WTC11 (cell line): ENCODE measurements at regions of chr1 and their contacts with region 1.

Region 1: GRCh38 chr1:157369808-157370521 is 182.3 kb downstream of the FCRL5 start:
- DNase-seq: peak; percentile 55
- ATAC-seq: peak; percentile 88
- H3K4me3 Mint-ChIP-seq: no peak overlapping the region
- H3K27ac Mint-ChIP-seq: no peak overlapping the region
- H3K4me1 Mint-ChIP-seq: peaks cover 17% of the 10 kb centered on the region
- H3K27me3 Mint-ChIP-seq: no peaks in the 10 kb centered on the region
- CTCF ChIP-seq: peak; percentile 91

Region 2: DNA sequence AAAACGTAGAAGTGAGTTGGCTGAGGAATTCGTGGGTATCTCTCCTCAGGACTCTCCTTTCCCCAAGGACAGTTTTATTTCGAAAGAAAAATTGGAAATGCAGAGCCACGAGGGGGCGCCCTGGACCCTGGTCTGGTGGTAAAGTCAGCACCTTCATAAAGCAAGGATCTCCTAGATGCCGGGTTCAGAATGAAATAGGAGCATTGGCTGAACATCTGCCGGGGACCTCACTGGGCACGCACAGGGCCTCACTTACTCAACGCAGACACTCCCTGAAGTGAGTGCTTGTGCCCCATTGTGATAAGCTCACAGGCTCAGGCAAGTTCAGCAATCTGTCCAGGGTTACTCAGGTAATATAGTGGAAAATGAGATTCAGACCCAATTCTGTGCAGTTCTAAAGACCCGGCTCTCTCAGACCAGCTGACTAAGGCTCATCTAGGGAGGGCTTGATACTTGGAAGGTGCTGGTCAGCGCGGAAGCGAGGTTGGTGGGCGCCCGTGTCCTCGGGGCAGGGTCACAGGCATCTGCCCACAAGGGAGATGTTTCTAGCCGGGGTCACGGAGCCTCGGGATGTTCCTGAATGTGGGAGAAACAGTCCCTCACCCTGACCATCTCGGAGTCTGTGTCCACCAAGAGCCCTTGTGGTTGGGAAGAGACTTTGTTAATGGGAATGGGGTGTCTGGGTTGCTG is 176.1 kb before region 1 on chr1:
- CTCF ChIA-PET with region 1: interaction called, 13 read pairs
- POLR2A ChIA-PET with region 1: no interaction called
- DNase-seq: peak; percentile 90
- ATAC-seq: peak; percentile 56
- H3K4me3 Mint-ChIP-seq: no peak overlapping the region
- H3K27ac Mint-ChIP-seq: no peak overlapping the region
- H3K4me1 Mint-ChIP-seq: peaks cover 21% of the 10 kb centered on the region
- H3K27me3 Mint-ChIP-seq: peaks cover 12% of the 10 kb centered on the region
- CTCF ChIP-seq: peak; percentile 45; the same call in 1 of the 2 replicates

Region 3: GRCh38 chr1:157312082-157312812 is 57.7 kb before region 1 on chr1:
- CTCF ChIA-PET with region 1: interaction called, 11 read pairs
- POLR2A ChIA-PET with region 1: no interaction called
- DNase-seq: no peak
- ATAC-seq: no peak
- H3K4me3 Mint-ChIP-seq: no peak overlapping the region
- H3K27ac Mint-ChIP-seq: no peak overlapping the region
- H3K4me1 Mint-ChIP-seq: peaks cover 28% of the 10 kb centered on the region
- H3K27me3 Mint-ChIP-seq: peaks cover 3% of the 10 kb centered on the region
- CTCF ChIP-seq: no peak

Region 4: GRCh38 chr1:157448636-157449035 is 78.7 kb after region 1 on chr1:
- CTCF ChIA-PET with region 1: no interaction called
- POLR2A ChIA-PET with region 1: no interaction called
- DNase-seq: no peak
- ATAC-seq: no peak
- H3K4me3 Mint-ChIP-seq: no peak overlapping the region
- H3K27ac Mint-ChIP-seq: no peak overlapping the region
- H3K4me1 Mint-ChIP-seq: peaks cover 14% of the 10 kb centered on the region
- H3K27me3 Mint-ChIP-seq: no peaks in the 10 kb centered on the region
- CTCF ChIP-seq: no peak

Region 5: DNA sequence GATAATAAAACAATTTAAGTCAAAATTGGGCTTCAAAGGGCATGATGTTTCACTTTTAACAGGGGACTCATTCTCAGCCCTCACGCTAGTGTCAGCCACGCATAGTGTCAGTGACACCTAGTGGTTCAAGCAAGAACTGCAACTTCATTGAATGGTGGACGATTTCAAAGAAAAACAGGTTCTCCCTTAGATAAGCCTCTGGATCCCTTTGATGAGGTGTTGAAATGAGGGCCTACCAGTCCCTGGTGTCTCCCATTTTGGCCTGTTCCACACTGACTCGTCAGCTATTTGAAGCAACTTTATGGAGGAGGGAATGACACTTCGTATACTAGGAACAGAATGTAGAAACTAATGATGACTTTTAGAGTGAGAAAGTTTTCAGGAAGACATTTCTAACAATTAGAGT is 126.2 kb after region 1 on chr1:
- CTCF ChIA-PET with region 1: interaction called, 13 read pairs
- POLR2A ChIA-PET with region 1: no interaction called
- DNase-seq: peak; percentile 49
- ATAC-seq: peak; percentile 82
- H3K4me3 Mint-ChIP-seq: no peak overlapping the region
- H3K27ac Mint-ChIP-seq: no peak overlapping the region
- H3K4me1 Mint-ChIP-seq: peaks cover 14% of the 10 kb centered on the region
- H3K27me3 Mint-ChIP-seq: no peaks in the 10 kb centered on the region
- CTCF ChIP-seq: peak; percentile 90